ENCODE measurements at regions of chr2 and their contacts with region 1.

Region 1: DNA sequence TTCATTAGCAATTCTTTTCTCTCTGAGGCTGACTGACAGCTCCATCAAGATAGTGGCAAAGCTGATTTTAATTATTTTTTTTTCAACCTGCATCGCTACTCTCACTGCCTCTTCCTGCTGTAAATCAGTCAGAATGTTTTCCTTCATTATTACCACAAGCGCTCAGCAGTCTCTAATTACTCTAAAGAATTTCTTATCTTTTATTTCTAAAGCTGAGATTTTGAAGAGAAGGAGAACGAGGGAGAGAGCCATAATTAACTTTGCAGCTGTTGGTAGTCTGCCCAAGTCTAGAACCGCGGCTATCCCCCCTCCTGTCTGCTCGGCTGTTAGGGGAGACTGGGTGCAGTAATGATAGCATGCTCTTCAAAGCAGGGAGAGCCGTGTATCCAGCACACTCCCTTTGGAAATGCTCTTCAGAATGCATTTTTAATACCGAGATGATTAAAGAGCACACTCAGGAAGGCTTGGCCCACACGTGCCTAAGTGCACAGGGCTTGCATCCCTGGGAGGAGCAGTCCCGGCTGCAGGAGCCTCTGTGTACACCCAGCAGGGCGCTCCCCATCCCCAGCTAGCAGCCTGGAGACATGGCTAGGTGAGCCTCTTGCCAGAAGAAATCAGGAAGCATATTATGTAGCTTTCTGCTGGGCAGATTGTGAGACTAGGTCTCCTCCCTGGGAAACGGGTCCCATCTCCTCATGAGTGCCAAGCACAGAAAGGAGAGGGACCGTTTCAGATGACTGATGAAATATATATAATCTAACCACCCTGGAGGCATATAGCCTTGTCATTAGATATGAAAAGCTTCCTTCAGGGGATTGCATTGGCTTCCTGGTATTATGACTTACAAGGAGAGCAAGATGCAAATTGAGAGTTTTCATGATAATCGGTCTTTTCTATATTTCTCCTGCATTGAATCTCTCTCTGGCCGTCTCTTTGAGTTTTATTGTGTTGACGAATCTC is 555.2 kb downstream of the CMPK2 start:
- DNase-seq: no peak
- ATAC-seq: peak; percentile 60
- H3K4me3 ChIP-seq: no peak overlapping the region
- H3K27ac ChIP-seq: peak overlapping the region; percentile 79
- H3K4me1 ChIP-seq: peaks cover 18% of the 10 kb centered on the region
- H3K27me3 ChIP-seq: no peaks in the 10 kb centered on the region
- CTCF ChIP-seq: no peak
- EP300 ChIP-seq: no peak
- POLR2A ChIP-seq: no peak
- RAD21 ChIP-seq: no peak

Region 2: GRCh38 chr2:6325616-6326015 is 15.1 kb after region 1 on chr2:
- CTCF ChIA-PET with region 1: interaction called, 5 read pairs
- POLR2A ChIA-PET with region 1: no interaction called
- RAD21 ChIA-PET with region 1: interaction called, 3 read pairs
- SMC1A ChIA-PET with region 1: interaction called, 13 read pairs
- in situ Hi-C with region 1: no loop called
- intact Hi-C with region 1: no loop called
- DNase-seq: no peak
- ATAC-seq: no peak
- H3K4me3 ChIP-seq: no peak overlapping the region
- H3K27ac ChIP-seq: no peak overlapping the region
- H3K4me1 ChIP-seq: no peaks in the 10 kb centered on the region
- H3K27me3 ChIP-seq: no peaks in the 10 kb centered on the region
- CTCF ChIP-seq: no peak
- EP300 ChIP-seq: no peak
- POLR2A ChIP-seq: no peak
- RAD21 ChIP-seq: no peak

Region 3: GRCh38 chr2:6337472-6337820 is 26.9 kb after region 1 on chr2:
- CTCF ChIA-PET with region 1: interaction called, 3 read pairs
- POLR2A ChIA-PET with region 1: interaction called, 3 read pairs
- RAD21 ChIA-PET with region 1: interaction called, 3 read pairs
- SMC1A ChIA-PET with region 1: interaction called, 105 read pairs
- in situ Hi-C with region 1: no loop called
- intact Hi-C with region 1: no loop called
- DNase-seq: no peak
- ATAC-seq: no peak
- H3K4me3 ChIP-seq: no peak overlapping the region
- H3K27ac ChIP-seq: no peak overlapping the region
- H3K4me1 ChIP-seq: peaks cover 3% of the 10 kb centered on the region
- H3K27me3 ChIP-seq: no peaks in the 10 kb centered on the region
- CTCF ChIP-seq: no peak
- EP300 ChIP-seq: no peak
- POLR2A ChIP-seq: no peak
- RAD21 ChIP-seq: no peak

Region 4: GRCh38 chr2:6343076-6343475 is 32.5 kb after region 1 on chr2:
- CTCF ChIA-PET with region 1: interaction called, 5 read pairs
- POLR2A ChIA-PET with region 1: interaction called, 3 read pairs
- RAD21 ChIA-PET with region 1: interaction called, 23 read pairs
- SMC1A ChIA-PET with region 1: interaction called, 105 read pairs
- in situ Hi-C with region 1: no loop called
- intact Hi-C with region 1: loop called (anchors 2 kb)
- DNase-seq: no peak
- ATAC-seq: no peak
- H3K4me3 ChIP-seq: no peak overlapping the region
- H3K27ac ChIP-seq: peak overlapping the region; percentile 29; the same call in 1 of the 2 replicates
- H3K4me1 ChIP-seq: peaks cover 23% of the 10 kb centered on the region
- H3K27me3 ChIP-seq: no peaks in the 10 kb centered on the region
- CTCF ChIP-seq: 0 out of 6 replicates have a peak, but pooled peaks of 1 of the 3 experiments have one; percentile 3
- EP300 ChIP-seq: no peak
- POLR2A ChIP-seq: no peak
- RAD21 ChIP-seq: no peak

Measured in GM12878 (cell line).